ENCODE measurements at regions of chr12 and their contacts with region 1.

Region 1: DNA sequence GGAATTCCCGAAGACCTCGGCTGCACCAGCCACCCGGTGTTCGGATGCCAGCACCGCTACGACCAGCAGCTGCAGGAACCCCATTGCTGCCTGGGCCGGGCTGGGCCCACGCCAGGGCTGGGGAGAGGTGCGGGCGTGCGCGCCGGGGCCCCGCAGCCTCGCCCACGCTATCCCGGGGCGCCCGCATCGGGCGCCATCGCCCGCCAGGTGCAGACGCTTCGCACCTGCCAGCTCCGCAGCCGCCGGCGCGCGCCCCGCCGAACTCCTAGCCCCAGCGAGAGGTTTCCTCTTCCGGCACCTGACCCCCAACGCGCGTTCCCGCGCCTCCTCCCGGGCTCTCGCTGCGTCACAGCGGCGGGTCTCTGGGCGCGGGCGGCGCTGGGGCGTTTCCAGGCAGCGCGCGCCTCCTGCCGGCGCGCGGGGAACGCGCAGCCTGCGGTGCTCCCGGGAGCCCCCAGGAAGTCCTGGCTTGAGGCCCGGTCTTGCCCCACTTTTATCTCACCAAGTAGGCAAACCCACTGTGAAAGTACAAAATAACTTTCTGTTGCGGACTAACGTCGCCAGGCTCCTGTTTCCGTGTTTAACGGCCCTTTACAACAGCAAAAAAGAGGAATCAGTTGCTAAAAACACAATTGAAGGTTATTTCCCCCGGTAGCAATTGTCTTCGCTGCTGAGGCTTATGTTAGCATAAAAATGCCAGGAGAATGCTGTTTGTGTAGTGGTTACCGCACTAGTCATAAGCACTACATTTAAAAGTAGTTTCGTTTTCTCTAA is at the start of gene TM7SF3:
- DNase-seq: peak; percentile 96 to 98 (median 97)
- ATAC-seq: peak; percentile 95
- H3K4me3 ChIP-seq: peak within 1 kb of the TSS; percentile 92
- H3K4me3 Mint-ChIP-seq: peak within 1 kb of the TSS; percentile 80 to 97 (median 94)
- H3K27ac ChIP-seq: peak within 1 kb of the TSS; percentile 84
- H3K27ac Mint-ChIP-seq: peak within 1 kb of the TSS; percentile 88 to 97 (median 96)
- H3K4me1 ChIP-seq: peaks cover 24 to 29% of the 10 kb centered on the region in 2 donors
- H3K4me1 Mint-ChIP-seq: peaks cover 22 to 60% (median 51%) of the 10 kb centered on the region in 7 donors
- H3K27me3 ChIP-seq: no peaks in the 10 kb centered on the region
- H3K27me3 Mint-ChIP-seq: no peaks in the 10 kb centered on the region
- total RNA-seq, gene TM7SF3: 24.4 to 57.3 (median 28.5) TPM

Region 2: GRCh38 chr12:26853303-26854030 is 160.8 kb before region 1 on chr12:
- CTCF ChIA-PET with region 1: interaction called, 9 read pairs
- POLR2A ChIA-PET with region 1: no interaction called
- intact Hi-C with region 1: loop called (anchors 1 kb)
- DNase-seq: peak; percentile 47 to 73 (median 69)
- ATAC-seq: peak; percentile 95
- H3K4me3 ChIP-seq: no peak overlapping the region
- H3K4me3 Mint-ChIP-seq: no peak overlapping the region
- H3K27ac ChIP-seq: no peak overlapping the region
- H3K27ac Mint-ChIP-seq: peak overlapping the region in 2 of 9 donors; percentile 1 to 81
- H3K4me1 ChIP-seq: no peaks in the 10 kb centered on the region
- H3K4me1 Mint-ChIP-seq: peaks cover 0 to 4% (median 0%) of the 10 kb centered on the region in 7 donors
- H3K27me3 ChIP-seq: no peaks in the 10 kb centered on the region
- H3K27me3 Mint-ChIP-seq: peaks cover 0 to 23% (median 0%) of the 10 kb centered on the region in 5 donors

Region 3: DNA sequence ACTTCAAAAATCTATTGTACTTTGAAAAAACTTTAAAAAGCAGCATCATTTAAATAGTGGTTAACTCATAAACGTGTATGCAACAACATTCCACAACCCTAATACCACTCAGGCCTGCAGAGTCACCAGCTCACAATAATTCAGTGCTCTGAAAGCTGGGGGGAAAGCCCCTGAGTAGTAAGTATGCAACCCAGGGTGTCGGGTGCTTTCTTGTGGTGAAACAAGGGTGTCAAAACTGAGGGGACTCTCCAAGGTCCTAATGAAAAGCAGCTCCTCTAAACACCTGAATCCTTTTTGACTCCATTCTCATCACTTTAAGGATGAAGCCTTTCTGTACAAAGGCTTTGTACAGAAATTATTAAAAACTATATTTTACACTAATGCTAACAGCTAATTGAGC is 42.3 kb before region 1 on chr12:
- CTCF ChIA-PET with region 1: no interaction called
- POLR2A ChIA-PET with region 1: interaction called, 3 read pairs
- intact Hi-C with region 1: loop called (anchors 1 to 2 kb)
- DNase-seq: peak in 8 of 9 donors; percentile 15 to 76 (median 44)
- ATAC-seq: peak; percentile 98
- H3K4me3 ChIP-seq: no peak overlapping the region
- H3K4me3 Mint-ChIP-seq: peak overlapping the region in 2 of 10 donors; percentile 16 to 43
- H3K27ac ChIP-seq: no peak overlapping the region
- H3K27ac Mint-ChIP-seq: peak overlapping the region in 7 of 9 donors; percentile 9 to 66 (median 45)
- H3K4me1 ChIP-seq: peaks cover 0 to 19% of the 10 kb centered on the region in 2 donors
- H3K4me1 Mint-ChIP-seq: peaks cover 6 to 22% (median 14%) of the 10 kb centered on the region in 7 donors
- H3K27me3 ChIP-seq: no peaks in the 10 kb centered on the region
- H3K27me3 Mint-ChIP-seq: no peaks in the 10 kb centered on the region

Region 4: DNA sequence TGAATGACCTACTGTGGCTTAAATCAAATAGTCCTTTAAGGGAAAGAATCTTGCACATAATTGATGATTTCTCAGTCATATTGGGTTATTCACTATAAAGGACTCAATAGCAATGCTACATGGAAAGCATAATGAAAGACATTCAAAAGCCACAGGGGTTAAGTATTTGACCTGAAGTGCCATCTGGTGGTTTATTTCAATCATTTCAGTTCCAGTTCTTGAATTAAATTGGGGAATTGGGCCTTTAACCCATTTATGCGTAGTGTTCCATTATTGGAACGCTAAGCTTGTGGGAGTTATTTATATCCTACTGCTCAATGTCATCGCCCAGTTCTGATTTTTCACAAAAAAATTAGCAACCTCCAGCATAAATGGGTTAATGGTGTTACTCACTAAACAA is 109.4 kb after region 1 on chr12:
- CTCF ChIA-PET with region 1: no interaction called
- POLR2A ChIA-PET with region 1: no interaction called
- intact Hi-C with region 1: loop called (anchors 1 to 2 kb)
- DNase-seq: no peak
- ATAC-seq: no peak
- H3K4me3 ChIP-seq: no peak overlapping the region
- H3K4me3 Mint-ChIP-seq: no peak overlapping the region
- H3K27ac ChIP-seq: no peak overlapping the region
- H3K27ac Mint-ChIP-seq: no peak overlapping the region
- H3K4me1 ChIP-seq: no peaks in the 10 kb centered on the region
- H3K4me1 Mint-ChIP-seq: peaks cover 0 to 2% (median 0%) of the 10 kb centered on the region in 7 donors
- H3K27me3 ChIP-seq: no peaks in the 10 kb centered on the region
- H3K27me3 Mint-ChIP-seq: peaks cover 0 to 5% (median 0%) of the 10 kb centered on the region in 5 donors

Region 5: DNA sequence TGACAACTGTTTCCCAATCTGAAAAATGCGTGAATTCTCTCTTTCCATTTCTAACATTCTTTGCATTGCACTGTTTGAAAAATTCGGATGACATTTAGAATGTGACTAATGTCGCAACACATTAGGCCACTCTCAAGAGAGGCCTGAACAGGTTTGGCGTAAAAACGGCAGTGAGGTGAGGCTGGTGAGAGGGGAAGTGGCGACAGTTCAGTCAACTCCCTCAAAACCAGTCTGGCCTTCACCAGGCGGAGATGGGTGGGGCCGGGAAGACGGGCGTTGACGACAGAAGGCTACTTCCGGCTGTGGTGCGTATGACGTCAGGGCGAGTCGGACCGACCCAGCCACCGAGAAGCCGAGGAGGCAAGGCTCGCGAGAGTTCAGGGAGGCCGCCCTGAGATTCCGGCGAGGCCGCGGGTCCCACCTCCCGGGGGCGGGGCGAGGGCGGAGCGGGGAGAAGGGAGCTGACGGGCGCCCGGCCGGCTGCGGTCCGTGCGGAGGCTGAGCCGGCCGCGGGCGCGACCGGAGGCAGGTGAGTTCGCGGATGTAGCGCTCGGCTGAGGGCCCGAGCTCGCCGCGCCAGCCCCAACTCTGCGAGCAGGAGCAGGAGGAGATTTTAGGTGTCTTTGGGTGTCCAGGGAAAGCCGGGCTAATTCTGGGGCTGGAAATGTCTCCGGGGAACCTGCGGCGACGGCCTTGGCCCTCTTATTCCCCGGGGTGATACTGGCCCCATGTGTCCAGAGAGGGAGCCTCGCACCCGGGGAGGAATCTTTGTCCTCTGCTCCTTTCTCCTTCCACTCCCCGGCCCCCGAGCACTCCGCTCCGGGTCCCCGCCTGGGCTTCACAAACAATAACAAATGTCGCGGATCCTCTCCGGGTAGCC is 229.8 kb after region 1 on chr12 and contains the start of gene STK38L:
- CTCF ChIA-PET with region 1: no interaction called
- POLR2A ChIA-PET with region 1: interaction called, 6 read pairs
- intact Hi-C with region 1: loop called (anchors 1 kb)
- DNase-seq: peak; percentile 94 to 98 (median 96)
- ATAC-seq: peak; percentile 98
- H3K4me3 ChIP-seq: peak within 1 kb of the TSS; percentile 84
- H3K4me3 Mint-ChIP-seq: peak within 1 kb of the TSS; percentile 97 to 100 (median 99)
- H3K27ac ChIP-seq: peak within 1 kb of the TSS; percentile 82
- H3K27ac Mint-ChIP-seq: peak within 1 kb of the TSS; percentile 92 to 99 (median 97)
- H3K4me1 ChIP-seq: peaks cover 12 to 13% of the 10 kb centered on the region in 2 donors
- H3K4me1 Mint-ChIP-seq: peaks cover 17 to 62% (median 51%) of the 10 kb centered on the region in 7 donors
- H3K27me3 ChIP-seq: no peaks in the 10 kb centered on the region
- H3K27me3 Mint-ChIP-seq: no peaks in the 10 kb centered on the region
- total RNA-seq, gene STK38L: 16.2 to 22.8 (median 21.2) TPM

Region 6: GRCh38 chr12:27383429-27384260 is 369.4 kb after region 1 on chr12:
- CTCF ChIA-PET with region 1: no interaction called
- POLR2A ChIA-PET with region 1: no interaction called
- intact Hi-C with region 1: loop called in 1 of 2 experiments (anchors 5 kb)
- DNase-seq: peak; percentile 8 to 70 (median 31)
- ATAC-seq: peak; percentile 78
- H3K4me3 ChIP-seq: no peak overlapping the region
- H3K4me3 Mint-ChIP-seq: no peak overlapping the region
- H3K27ac ChIP-seq: no peak overlapping the region
- H3K27ac Mint-ChIP-seq: no peak overlapping the region
- H3K4me1 ChIP-seq: no peaks in the 10 kb centered on the region
- H3K4me1 Mint-ChIP-seq: peaks cover 0 to 3% (median 0%) of the 10 kb centered on the region in 7 donors
- H3K27me3 ChIP-seq: no peaks in the 10 kb centered on the region
- H3K27me3 Mint-ChIP-seq: peaks cover 0 to 4% (median 0%) of the 10 kb centered on the region in 5 donors

Region 7: DNA sequence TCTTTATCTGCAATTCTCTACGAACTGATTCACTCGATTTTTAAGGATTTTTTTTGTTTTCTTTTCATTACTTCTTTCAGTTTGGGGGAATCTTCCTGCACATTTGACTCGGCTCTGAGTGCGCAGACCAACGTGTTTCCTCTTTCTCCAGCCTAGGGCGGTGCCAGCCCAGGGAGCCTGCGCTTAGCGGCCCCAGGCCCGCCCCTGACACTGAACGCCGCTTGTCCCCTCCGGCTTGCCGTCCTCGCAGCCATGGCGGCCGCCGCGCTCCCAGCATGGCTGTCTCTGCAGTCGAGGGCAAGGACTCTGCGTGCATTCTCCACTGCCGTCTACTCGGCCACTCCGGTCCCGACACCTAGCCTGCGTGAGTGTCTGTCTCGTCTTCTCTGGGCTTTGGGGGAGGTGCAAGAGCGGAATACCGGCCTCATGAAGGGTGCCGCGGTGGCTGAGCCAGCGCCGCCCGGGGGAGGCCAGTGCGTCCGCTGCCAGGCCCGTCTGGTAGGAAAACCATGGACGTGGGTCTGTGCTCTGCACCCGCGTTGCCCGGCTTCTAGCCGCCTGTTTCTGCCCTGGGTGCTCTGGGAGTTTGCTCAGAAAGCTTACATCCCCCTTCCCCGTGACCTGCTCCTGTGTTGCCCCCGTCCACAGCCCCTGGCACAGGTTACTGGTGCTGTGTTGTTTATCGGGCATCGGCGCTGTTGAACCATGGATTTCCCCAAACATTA is 696.5 kb after region 1 on chr12 and contains the start of gene MRPS35:
- CTCF ChIA-PET with region 1: no interaction called
- POLR2A ChIA-PET with region 1: no interaction called
- intact Hi-C with region 1: loop called (anchors 1 kb)
- DNase-seq: peak; percentile 86 to 94 (median 92)
- ATAC-seq: peak; percentile 100
- H3K4me3 ChIP-seq: peak within 1 kb of the TSS; percentile 98
- H3K4me3 Mint-ChIP-seq: peak within 1 kb of the TSS; percentile 94 to 100 (median 98)
- H3K27ac ChIP-seq: peak within 1 kb of the TSS; percentile 85
- H3K27ac Mint-ChIP-seq: peak within 1 kb of the TSS; percentile 91 to 100 (median 98)
- H3K4me1 ChIP-seq: peaks cover 7 to 13% of the 10 kb centered on the region in 2 donors
- H3K4me1 Mint-ChIP-seq: peaks cover 21 to 46% (median 39%) of the 10 kb centered on the region in 7 donors
- H3K27me3 ChIP-seq: no peaks in the 10 kb centered on the region
- H3K27me3 Mint-ChIP-seq: peaks cover 0 to 18% (median 0%) of the 10 kb centered on the region in 5 donors
- total RNA-seq, gene MRPS35: 19.9 to 35.7 (median 23.5) TPM